ENCODE measurements at regions of chr1 and their contacts with region 1.

Region 1: DNA sequence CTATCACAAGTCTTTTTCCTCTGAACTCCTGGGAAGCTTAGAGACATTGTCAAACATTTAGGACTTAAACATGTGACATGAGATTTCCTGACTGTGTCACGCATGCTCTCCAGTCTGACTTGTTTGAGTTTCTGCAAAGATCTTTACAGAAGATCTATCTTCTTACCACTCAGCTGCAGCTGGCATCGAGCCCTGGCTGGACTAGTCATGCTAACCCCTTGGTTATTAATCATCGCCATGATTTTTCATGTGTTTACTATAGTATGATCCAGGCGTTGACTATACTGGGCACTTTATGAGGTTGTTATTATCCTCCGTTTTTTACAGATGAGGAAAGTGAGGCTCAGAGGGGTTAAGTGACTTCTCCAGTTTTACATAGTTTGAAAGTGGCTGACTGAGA is 18.1 kb upstream of the IRF2BP2 start:
- DNase-seq: no peak
- ATAC-seq: no peak
- H3K4me3 ChIP-seq: no peak overlapping the region
- H3K27ac ChIP-seq: no peak overlapping the region
- H3K4me1 ChIP-seq: peaks cover 0 to 20% (median 2%) of the 10 kb centered on the region in 12 donors
- H3K27me3 ChIP-seq: no peaks in the 10 kb centered on the region
- CTCF ChIP-seq: no peak
- POLR2A ChIP-seq: no peak

Region 2: DNA sequence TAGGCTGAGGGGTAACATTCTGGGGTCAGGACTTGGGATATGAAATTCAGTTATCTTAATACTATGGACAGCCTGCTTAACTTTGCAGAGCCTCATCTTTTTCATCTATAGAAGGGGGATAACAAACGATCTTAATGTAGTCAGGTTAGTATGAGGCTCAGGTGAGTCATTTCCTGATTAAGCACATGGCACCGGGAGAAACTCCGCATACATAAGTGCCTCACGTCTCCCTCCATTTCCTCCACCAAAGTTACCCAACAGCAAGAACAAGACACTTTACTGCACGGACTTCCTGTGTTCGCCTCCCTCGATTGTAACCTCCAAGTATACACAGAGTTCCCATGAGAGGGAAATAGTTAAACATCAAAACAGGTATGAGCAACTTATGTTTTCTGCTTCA is 367.5 kb before region 1 on chr1:
- intact Hi-C with region 1: no loop called
- DNase-seq: no peak
- ATAC-seq: no peak
- H3K4me3 ChIP-seq: no peak overlapping the region
- H3K27ac ChIP-seq: no peak overlapping the region
- H3K4me1 ChIP-seq: no peaks in the 10 kb centered on the region
- H3K27me3 ChIP-seq: peaks cover 0 to 18% (median 0%) of the 10 kb centered on the region in 9 donors
- CTCF ChIP-seq: no peak
- POLR2A ChIP-seq: no peak

Region 3: DNA sequence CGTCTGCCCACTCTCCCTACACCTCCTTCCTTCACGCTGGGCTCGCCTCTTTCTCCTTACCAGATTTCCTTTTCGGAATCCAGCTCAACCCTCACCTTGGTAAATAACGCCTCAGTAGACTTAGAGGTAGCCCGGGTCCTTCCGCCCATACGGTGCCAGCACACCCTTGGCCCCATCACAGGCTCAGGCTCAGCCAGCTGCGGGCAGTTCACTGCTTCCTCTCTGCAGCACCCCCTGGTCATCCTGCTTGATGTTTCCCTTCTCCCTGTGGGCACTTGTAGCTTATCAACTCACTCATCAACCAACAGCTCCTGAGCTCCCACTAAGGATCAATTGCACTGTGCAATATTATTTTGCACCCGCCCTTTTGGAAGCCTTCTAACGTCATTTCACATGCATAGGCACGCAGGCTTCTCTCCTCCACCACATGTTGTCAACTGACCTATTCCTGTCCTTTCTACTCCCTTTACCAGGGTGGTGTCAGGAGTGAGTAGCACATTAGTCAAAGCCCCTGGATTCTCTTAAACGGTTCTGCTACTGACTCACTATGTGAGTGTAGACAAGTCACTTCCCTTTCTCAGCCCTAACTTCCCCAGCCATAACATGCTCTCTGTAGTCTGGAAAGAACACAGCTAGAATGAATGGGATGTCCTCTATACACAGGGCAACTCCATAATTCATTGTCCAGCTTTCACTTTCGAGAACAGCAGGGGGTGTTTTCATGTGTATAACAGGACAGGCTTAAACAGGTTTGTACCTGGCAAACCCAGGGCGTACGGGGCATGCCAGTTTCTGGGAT is 29.0 kb after region 1 on chr1:
- intact Hi-C with region 1: loop called in 2 of 10 experiments (anchors 5 kb)
- DNase-seq: no peak
- ATAC-seq: peak; percentile 65 to 86 (median 70)
- H3K4me3 ChIP-seq: no peak overlapping the region
- H3K27ac ChIP-seq: peak overlapping the region in 1 of 12 donors; percentile 85
- H3K4me1 ChIP-seq: peaks cover 0 to 33% (median 0%) of the 10 kb centered on the region in 12 donors
- H3K27me3 ChIP-seq: no peaks in the 10 kb centered on the region
- CTCF ChIP-seq: peak in 2 of 12 donors; percentile 4 to 9
- POLR2A ChIP-seq: no peak

Region 4: GRCh38 chr1:234758851-234759250 is 130.8 kb after region 1 on chr1:
- intact Hi-C with region 1: no loop called
- DNase-seq: no peak
- ATAC-seq: no peak
- H3K4me3 ChIP-seq: no peak overlapping the region
- H3K27ac ChIP-seq: peak overlapping the region in 1 of 12 donors; percentile 15
- H3K4me1 ChIP-seq: peaks cover 0 to 33% (median 11%) of the 10 kb centered on the region in 12 donors
- H3K27me3 ChIP-seq: no peaks in the 10 kb centered on the region
- CTCF ChIP-seq: no peak
- POLR2A ChIP-seq: no peak